Dorsolateral prefrontal cortex (tissue), 120 donors: ENCODE measurements at regions of chr13 and their contacts with region 1.

Region 1: GRCh38 chr13:110715395-110716235 is 2.1 kb downstream of the ING1 start:
- DNase-seq: peak; percentile 90 to 100 (median 99)
- H3K4me3 ChIP-seq: peak overlapping the region; percentile 76 to 100 (median 98)
- H3K27ac ChIP-seq: peak overlapping the region; percentile 92 to 100 (median 99)
- H3K27me3 ChIP-seq: no peaks in the 10 kb centered on the region
- CTCF ChIP-seq: peak in 37 of 56 donors; percentile 6 to 55 (median 26)

Region 2: DNA sequence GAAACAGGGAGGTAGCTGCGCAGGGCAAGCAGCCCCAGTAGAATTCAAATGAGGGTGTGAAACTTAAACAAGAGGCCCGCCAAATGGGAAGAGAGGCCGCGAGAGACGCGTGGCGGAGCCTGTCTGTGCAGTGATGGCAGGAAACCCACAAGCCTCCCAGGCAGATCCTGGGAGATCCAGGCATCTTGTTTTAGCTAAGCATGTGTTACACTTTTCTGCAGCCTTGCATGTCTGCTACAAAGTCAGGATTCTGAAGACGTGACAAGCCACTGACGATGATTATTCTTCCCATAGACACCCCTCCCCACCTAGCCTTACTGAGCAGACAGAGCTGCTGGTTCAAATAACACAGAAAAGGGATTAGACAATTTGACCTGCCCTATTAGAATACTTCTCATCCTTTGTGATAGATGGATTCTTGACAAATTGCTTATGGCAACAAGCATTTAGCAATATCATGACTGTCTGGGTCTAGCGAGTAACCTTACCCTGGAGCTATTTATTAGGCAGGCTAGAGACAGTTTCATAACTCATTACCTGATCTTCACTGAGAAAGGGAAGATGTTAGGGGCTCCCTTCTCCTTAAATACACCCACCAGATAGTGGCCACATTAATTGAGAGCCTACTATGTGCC is 744.0 kb before region 1 on chr13:
- intact Hi-C with region 1: no loop called
- DNase-seq: no peak
- H3K4me3 ChIP-seq: no peak overlapping the region
- H3K27ac ChIP-seq: no peak overlapping the region
- H3K27me3 ChIP-seq: peaks cover 0 to 6% (median 0%) of the 10 kb centered on the region in 45 donors
- CTCF ChIP-seq: no peak

Region 3: DNA sequence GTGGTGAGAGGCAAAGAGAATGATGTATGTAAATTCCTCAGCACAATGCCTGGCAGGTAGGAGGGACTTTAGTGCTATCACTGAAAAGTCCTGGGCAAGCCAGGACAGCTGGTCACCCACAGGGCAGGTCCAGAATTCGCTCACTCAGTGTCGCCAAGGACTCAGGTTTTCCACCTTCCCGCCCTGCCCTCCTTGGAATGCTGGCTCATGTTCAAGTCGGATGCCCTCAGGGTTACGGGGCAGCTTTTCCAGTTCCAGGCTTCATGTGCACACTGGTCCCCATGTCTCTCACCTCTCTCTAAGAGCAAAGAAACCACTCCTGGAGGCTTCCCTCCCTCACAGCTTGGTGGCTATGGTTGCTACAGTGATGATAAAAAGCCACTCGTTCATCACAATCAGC is 125.0 kb before region 1 on chr13:
- intact Hi-C with region 1: no loop called
- DNase-seq: no peak
- H3K4me3 ChIP-seq: no peak overlapping the region
- H3K27ac ChIP-seq: no peak overlapping the region
- H3K27me3 ChIP-seq: peaks cover 0 to 2% (median 0%) of the 10 kb centered on the region in 45 donors
- CTCF ChIP-seq: no peak

Region 4: GRCh38 chr13:110615322-110616102 is 100.1 kb before region 1 on chr13 and contains the start of gene NAXD:
- intact Hi-C with region 1: loop called (anchors 5 kb)
- DNase-seq: peak; percentile 92 to 98 (median 96)
- H3K4me3 ChIP-seq: peak within 1 kb of the TSS; percentile 66 to 98 (median 91)
- H3K27ac ChIP-seq: peak within 1 kb of the TSS; percentile 10 to 97 (median 90)
- H3K27me3 ChIP-seq: peaks cover 0 to 6% (median 0%) of the 10 kb centered on the region in 45 donors
- CTCF ChIP-seq: peak in 32 of 56 donors; percentile 5 to 54 (median 26)
- total RNA-seq, gene NAXD: 39.9 to 64.4 (median 50.7) TPM

Region 5: DNA sequence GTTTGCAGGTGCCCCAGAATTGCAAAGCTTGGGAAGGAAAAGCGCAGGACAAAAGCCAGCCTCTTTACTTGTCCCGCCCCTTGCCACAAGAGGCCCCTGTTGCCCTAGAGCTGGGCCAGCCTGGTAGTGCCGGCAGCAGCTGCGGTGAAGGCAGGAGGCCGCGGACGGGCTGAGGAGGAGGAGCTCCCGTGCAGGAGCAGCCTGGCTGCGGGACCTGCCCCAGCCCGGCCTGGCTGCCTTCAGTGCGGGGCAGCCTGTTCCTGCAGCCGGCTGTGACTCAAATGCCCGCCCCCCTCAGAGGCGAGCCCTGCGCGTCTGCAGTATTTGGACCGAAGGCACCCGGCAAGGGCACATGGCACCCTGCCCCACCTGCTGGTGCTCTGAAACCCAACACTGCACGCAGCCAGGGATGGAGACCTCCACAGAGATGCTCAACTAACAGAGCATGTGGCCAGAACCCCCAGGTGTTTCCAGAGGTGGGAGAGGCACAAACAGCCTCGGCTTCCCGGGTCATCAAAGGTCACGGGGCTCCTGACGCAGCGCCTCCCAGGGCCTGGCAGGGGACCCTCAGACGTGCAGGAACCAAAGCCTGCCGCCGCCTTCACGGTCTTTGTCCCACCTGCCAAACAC is 70.6 kb before region 1 on chr13:
- intact Hi-C with region 1: loop called in 1 of 2 experiments (anchors 10 kb)
- DNase-seq: peak; percentile 46 to 91 (median 73)
- H3K4me3 ChIP-seq: peak overlapping the region in 7 of 59 donors; percentile 3 to 35 (median 25)
- H3K27ac ChIP-seq: peak overlapping the region in 44 of 59 donors; percentile 1 to 70 (median 40)
- H3K27me3 ChIP-seq: no peaks in the 10 kb centered on the region
- CTCF ChIP-seq: peak in 53 of 56 donors; percentile 18 to 70 (median 57)

Region 6: GRCh38 chr13:110894097-110894496 is 178.5 kb after region 1 on chr13:
- intact Hi-C with region 1: no loop called
- DNase-seq: no peak
- H3K4me3 ChIP-seq: no peak overlapping the region
- H3K27ac ChIP-seq: no peak overlapping the region
- H3K27me3 ChIP-seq: no peaks in the 10 kb centered on the region
- CTCF ChIP-seq: no peak

Region 7: GRCh38 chr13:111046590-111047141 is 331.1 kb after region 1 on chr13:
- intact Hi-C with region 1: loop called in 1 of 2 experiments (anchors 10 kb)
- DNase-seq: no peak
- H3K4me3 ChIP-seq: no peak overlapping the region
- H3K27ac ChIP-seq: peak overlapping the region in 7 of 59 donors; percentile 11 to 42 (median 28)
- H3K27me3 ChIP-seq: no peaks in the 10 kb centered on the region
- CTCF ChIP-seq: peak in 10 of 56 donors; percentile 8 to 20 (median 14)